Left lung (tissue), 14 donors: ENCODE measurements at regions of chr12 and their contacts with region 1.

Region 1: GRCh38 chr12:79555028-79555930 is 135.5 kb downstream of the PAWR start:
- DNase-seq: peak in 2 of 4 donors; percentile 67 to 78
- ATAC-seq: peak; percentile 75
- H3K4me3 ChIP-seq: no peak overlapping the region
- H3K27ac ChIP-seq: no peak overlapping the region
- H3K4me1 ChIP-seq: peaks cover 3 to 18% of the 10 kb centered on the region in 2 donors
- H3K27me3 ChIP-seq: no peaks in the 10 kb centered on the region
- CTCF ChIP-seq: peak; percentile 22 to 23

Region 2: GRCh38 chr12:79083181-79083580 is 472.1 kb before region 1 on chr12:
- intact Hi-C with region 1: no loop called
- DNase-seq: no peak
- ATAC-seq: no peak
- H3K4me3 ChIP-seq: no peak overlapping the region
- H3K27ac ChIP-seq: no peak overlapping the region
- H3K4me1 ChIP-seq: no peaks in the 10 kb centered on the region
- H3K27me3 ChIP-seq: no peaks in the 10 kb centered on the region
- CTCF ChIP-seq: no peak

Region 3: GRCh38 chr12:79747274-79747673 is 192.0 kb after region 1 on chr12:
- intact Hi-C with region 1: loop called in 1 of 2 experiments (anchors 10 kb)
- DNase-seq: no peak
- ATAC-seq: no peak
- H3K4me3 ChIP-seq: no peak overlapping the region
- H3K27ac ChIP-seq: no peak overlapping the region
- H3K4me1 ChIP-seq: no peaks in the 10 kb centered on the region
- H3K27me3 ChIP-seq: no peaks in the 10 kb centered on the region
- CTCF ChIP-seq: no peak

Region 4: DNA sequence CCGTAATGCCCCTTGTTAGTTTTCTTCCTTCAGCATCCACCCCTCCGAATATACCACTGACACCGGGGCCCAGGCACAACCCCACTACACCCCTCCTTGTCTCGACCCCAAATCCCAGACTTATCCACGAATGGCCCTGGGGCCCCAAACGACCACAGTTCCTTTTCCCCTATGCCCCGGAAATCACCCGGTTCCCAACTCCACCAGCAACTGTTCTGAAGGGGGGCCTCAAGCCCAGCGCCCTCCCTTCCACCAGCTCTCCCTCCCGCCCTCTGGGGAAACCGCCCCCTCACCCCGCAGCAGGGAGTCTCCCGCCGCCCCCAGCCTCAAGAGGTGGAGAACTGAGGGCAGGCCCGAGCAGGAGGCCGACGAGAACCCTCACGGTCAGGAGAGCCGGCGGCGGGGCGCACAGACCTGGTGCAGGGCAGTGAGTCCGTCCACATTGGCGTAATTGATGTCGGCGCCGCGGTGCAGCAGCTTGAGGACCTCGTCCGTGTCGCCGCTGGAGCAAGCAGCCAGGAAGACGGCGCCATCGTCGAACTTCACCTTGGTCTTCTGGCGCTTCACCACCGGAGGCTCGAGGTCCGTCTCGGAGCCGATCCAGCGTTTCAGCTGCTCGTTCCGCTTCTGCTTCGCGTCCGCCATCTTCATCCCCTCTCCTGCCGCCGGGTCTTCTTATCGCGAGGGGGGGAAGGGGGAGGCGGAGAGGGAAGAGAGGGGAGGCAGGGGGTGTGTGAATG is 379.2 kb after region 1 on chr12:
- intact Hi-C with region 1: loop called in 1 of 2 experiments (anchors 5 kb)
- DNase-seq: peak in 3 of 4 donors; percentile 64 to 90 (median 79)
- ATAC-seq: peak; percentile 49
- H3K4me3 ChIP-seq: peak overlapping the region; percentile 77 to 93
- H3K27ac ChIP-seq: peak overlapping the region; percentile 96 to 99
- H3K4me1 ChIP-seq: peaks cover 12 to 57% of the 10 kb centered on the region in 2 donors
- H3K27me3 ChIP-seq: no peaks in the 10 kb centered on the region
- CTCF ChIP-seq: no peak

Region 5: DNA sequence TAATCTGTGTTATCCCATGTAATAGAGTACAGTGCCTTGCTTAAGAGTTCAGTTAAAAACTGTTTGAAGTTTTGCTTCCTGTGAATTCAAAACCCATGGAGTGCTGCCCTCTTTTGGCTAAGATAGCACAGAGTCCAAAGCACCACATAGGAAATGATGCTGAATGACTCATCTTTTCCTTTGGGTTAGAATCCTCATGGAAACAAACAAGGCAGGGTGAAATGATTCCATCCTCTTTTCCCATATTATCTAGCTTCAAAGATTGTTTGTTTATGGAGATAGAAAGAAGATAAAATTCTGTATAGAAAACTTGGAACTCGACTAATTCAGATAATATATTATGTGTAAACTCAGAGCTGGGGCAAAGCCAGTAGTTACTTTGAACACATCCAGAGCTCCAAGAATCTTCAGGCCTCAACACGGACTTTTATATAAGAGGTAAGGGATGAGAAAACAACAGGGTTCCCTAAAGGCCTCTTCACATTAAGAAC is 631.5 kb after region 1 on chr12:
- intact Hi-C with region 1: loop called in 1 of 2 experiments (anchors 5 kb)
- DNase-seq: peak in 2 of 4 donors; percentile 89 to 93
- ATAC-seq: peak; percentile 94
- H3K4me3 ChIP-seq: no peak overlapping the region
- H3K27ac ChIP-seq: peak overlapping the region; percentile 71 to 83
- H3K4me1 ChIP-seq: peaks cover 0 to 11% of the 10 kb centered on the region in 2 donors
- H3K27me3 ChIP-seq: no peaks in the 10 kb centered on the region
- CTCF ChIP-seq: peak; percentile 69 to 77